H1 (cell line): ENCODE measurements at regions of chr6 and their contacts with region 1.

Region 1: GRCh38 chr6:37051138-37052026 is 45.9 kb downstream of the FGD2 start:
- DNase-seq: peak; percentile 47 to 98
- H3K4me3 ChIP-seq: no peak overlapping the region
- H3K27ac ChIP-seq: no peak overlapping the region
- H3K4me1 ChIP-seq: peaks cover 0 to 22% (median 17%) of the 10 kb centered on the region in 4 experiments; a peak in 6 of 7 replicates
- H3K27me3 ChIP-seq: no peaks in the 10 kb centered on the region
- CTCF ChIP-seq: peak in 2 of 3 experiments; percentile 97; a peak in 3 of 4 replicates
- EP300 ChIP-seq: 0 out of 3 replicates have a peak, but pooled peaks of 1 of the 2 experiments have one; percentile 24
- POLR2A ChIP-seq: no peak
- RAD21 ChIP-seq: peak; percentile 97 to 98

Region 2: DNA sequence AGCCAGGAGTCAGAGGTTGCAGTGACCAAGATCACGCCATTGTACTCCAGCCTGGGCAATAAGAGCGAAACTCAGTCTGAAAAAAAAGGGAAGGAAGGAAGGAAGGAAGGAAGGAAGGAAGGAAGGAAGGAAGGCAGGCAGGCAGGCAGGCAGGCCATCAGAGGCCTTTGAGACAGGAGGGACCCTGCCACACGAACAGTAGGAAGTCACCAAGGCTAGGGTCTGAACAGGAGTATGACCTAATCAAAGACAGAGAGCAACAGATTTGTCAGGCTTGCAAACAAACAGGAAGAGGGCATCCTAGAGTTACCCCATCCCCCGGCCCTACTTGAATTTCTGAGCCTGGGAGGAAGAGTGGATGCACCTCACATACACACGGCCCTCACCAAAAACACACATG is 21.1 kb after region 1 on chr6:
- CTCF ChIA-PET with region 1: interaction called, 91 read pairs
- POLR2A ChIA-PET with region 1: interaction called, 10 read pairs
- DNase-seq: no peak
- H3K4me3 ChIP-seq: no peak overlapping the region
- H3K27ac ChIP-seq: no peak overlapping the region
- H3K4me1 ChIP-seq: peaks cover 4 to 14% (median 11%) of the 10 kb centered on the region in 4 experiments
- H3K27me3 ChIP-seq: no peaks in the 10 kb centered on the region
- CTCF ChIP-seq: no peak
- EP300 ChIP-seq: no peak
- POLR2A ChIP-seq: no peak
- RAD21 ChIP-seq: no peak; a peak in 1 of 4 replicates

Region 3: DNA sequence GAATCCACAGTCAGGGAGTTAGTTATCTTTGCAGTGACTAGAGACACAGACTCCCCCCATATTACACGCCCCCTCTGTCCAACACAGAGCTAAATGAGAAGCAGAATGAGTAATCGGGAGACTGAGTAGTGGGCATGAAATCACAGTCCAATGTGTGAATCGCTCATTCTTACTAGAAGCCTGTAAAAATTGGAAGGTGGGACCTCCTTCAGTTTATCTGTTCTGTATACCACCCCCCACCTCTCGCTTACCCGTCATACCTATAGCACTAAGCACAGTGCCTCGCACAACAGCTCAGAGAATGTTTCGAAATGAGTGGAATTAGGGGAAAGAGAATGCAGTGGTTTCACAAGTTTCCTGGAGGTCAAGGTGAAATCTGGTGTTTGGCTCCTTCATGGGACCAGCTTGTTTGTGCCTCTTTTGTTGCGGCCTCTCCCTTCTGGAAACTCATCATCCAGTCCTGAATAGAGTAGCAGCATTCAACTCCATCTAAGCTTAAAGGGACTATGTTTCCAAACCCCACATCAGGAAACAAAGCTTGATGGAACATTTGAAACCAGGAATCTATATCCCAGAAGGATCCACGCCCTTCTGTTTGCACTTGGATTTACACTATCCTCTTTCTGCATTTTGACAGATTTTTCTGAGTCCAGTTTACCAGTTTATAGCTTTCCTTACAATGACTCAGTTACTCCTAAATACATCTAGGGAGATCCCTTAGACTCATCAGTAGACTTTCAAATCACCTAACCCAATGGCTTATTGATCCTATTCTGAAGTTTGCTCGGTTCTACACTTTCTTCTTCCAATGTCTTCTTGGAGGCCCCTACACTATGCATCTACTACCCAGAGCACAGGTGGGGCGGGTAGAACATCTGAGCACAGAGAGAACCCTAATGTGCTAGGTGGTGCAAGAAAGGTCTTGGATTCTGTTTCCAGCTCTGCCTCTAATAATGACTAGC is 59.4 kb after region 1 on chr6:
- CTCF ChIA-PET with region 1: interaction called, 32 read pairs
- POLR2A ChIA-PET with region 1: interaction called, 80 read pairs
- DNase-seq: no peak
- H3K4me3 ChIP-seq: no peak overlapping the region
- H3K27ac ChIP-seq: no peak overlapping the region
- H3K4me1 ChIP-seq: no peaks in the 10 kb centered on the region; a peak in 3 of 7 replicates
- H3K27me3 ChIP-seq: no peaks in the 10 kb centered on the region
- CTCF ChIP-seq: no peak
- EP300 ChIP-seq: no peak
- POLR2A ChIP-seq: no peak
- RAD21 ChIP-seq: no peak

Region 4: GRCh38 chr6:37131104-37131959 is 80.0 kb after region 1 on chr6:
- CTCF ChIA-PET with region 1: interaction called, 25 read pairs
- POLR2A ChIA-PET with region 1: interaction called, 36 read pairs
- DNase-seq: no peak
- H3K4me3 ChIP-seq: no peak overlapping the region
- H3K27ac ChIP-seq: peak overlapping the region; percentile 46; the same call in 1 of the 2 replicates
- H3K4me1 ChIP-seq: peaks cover 22 to 48% (median 34%) of the 10 kb centered on the region in 4 experiments
- H3K27me3 ChIP-seq: no peaks in the 10 kb centered on the region
- CTCF ChIP-seq: no peak
- EP300 ChIP-seq: no peak
- POLR2A ChIP-seq: no peak
- RAD21 ChIP-seq: no peak

Region 5: GRCh38 chr6:37160922-37161778 is 109.8 kb after region 1 on chr6:
- CTCF ChIA-PET with region 1: interaction called, 10 read pairs
- POLR2A ChIA-PET with region 1: no interaction called
- DNase-seq: no peak
- H3K4me3 ChIP-seq: no peak overlapping the region
- H3K27ac ChIP-seq: no peak overlapping the region
- H3K4me1 ChIP-seq: no peaks in the 10 kb centered on the region
- H3K27me3 ChIP-seq: no peaks in the 10 kb centered on the region
- CTCF ChIP-seq: no peak
- EP300 ChIP-seq: no peak
- POLR2A ChIP-seq: no peak
- RAD21 ChIP-seq: no peak

Region 6: DNA sequence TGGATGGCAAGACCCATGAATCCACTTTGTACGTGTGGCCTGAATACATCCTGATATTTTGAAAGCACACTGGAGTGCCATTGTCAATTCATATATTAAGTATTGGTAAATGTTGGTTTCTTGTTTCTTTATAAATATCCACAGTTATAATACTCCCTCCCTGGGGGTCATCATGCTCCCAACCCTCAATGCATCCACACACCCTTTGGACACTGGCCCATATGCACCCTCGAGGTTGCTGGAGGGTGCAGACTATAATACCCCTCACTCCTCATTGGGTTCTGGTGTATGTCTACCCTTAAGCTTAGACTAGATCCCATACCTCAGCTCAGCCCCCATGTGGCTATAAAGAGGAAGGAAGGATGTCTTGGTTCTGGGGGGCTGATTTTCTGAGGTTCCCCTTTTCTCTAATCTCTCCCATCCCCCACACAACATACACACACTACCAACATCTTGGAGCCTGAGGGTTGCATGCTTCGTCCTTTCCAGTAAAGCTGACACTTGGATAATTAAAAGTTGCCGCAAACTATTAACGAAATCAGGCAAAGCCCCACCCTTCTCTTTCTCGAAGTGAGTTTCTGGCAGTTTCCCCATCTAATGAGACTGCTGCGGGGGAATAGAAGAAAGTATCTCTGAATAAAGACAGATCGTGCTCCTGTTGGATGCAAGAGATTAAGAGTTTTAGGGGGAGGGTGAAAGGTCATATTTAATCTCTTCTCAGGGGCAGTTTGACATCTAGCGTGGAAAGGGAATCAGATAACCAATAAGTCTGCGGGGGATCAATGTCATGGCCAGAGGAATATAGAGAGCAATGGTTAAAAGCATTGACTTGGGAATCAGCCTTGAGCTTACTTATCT is 125.9 kb after region 1 on chr6:
- CTCF ChIA-PET with region 1: interaction called, 82 read pairs
- POLR2A ChIA-PET with region 1: interaction called, 82 read pairs
- DNase-seq: no peak
- H3K4me3 ChIP-seq: no peak overlapping the region
- H3K27ac ChIP-seq: no peak overlapping the region
- H3K4me1 ChIP-seq: peaks cover 5 to 8% (median 6%) of the 10 kb centered on the region in 4 experiments; a peak in 5 of 7 replicates
- H3K27me3 ChIP-seq: no peaks in the 10 kb centered on the region
- CTCF ChIP-seq: no peak
- EP300 ChIP-seq: no peak
- POLR2A ChIP-seq: no peak
- RAD21 ChIP-seq: no peak